ENCODE measurements at regions of chr19 and their contacts with region 1.

Region 1: DNA sequence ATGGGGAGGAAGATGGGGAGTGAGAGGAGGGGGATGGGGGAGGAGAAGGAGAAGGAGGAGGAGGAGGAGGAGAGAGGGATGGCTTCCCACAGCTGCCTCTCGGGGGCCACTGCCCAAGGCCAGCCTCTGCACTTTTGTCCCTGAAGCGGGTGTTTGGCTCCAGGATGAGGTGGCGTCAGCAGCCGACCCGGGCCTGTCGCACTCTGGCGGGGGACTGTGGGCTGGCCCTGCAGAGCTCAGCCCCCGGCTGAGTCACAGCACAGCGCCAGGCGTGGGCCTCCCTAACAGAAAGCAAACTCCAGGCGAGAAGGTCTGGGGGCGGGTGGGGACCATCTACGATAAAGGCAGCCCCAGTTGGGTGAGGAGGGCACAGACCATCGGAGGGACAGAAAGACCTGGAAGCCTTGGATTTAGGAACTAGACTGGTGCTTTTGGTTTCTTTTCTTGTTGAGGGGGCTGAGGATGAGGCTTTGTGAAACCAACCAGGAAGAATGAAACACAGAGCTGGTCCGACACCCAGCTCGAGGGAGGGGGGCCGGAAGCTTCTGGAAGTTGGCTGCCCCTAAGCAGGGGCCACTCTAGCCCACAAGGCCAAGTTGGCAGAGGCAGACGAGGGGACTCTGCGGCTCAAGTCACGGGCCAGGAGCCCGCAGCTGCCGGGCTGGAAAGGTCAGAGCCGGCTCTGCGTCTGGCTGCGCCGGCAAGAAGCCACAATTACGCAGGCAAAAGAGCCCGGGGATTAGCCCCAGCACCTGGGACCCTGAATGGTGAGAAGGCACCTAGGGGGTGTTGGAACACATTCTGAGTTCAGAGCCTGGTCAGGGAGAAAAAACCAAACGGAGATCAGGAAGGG is 18.2 kb downstream of the LSM4 start:
- DNase-seq: peak; percentile 64
- H3K4me3 Mint-ChIP-seq: peak overlapping the region; percentile 49
- H3K27ac Mint-ChIP-seq: peak overlapping the region; percentile 82
- H3K4me1 Mint-ChIP-seq: peaks cover 10% of the 10 kb centered on the region
- H3K27me3 Mint-ChIP-seq: no peaks in the 10 kb centered on the region
- CTCF ChIP-seq: no peak

Region 2: GRCh38 chr19:18322759-18323460 is 18.2 kb after region 1 on chr19 and contains the start of gene LSM4:
- CTCF ChIA-PET with region 1: interaction called, 11 read pairs
- intact Hi-C with region 1: no loop called
- DNase-seq: peak; percentile 95
- H3K4me3 Mint-ChIP-seq: peak within 1 kb of the TSS; percentile 72
- H3K27ac Mint-ChIP-seq: peak within 1 kb of the TSS; percentile 91
- H3K4me1 Mint-ChIP-seq: peaks cover 31% of the 10 kb centered on the region
- H3K27me3 Mint-ChIP-seq: no peaks in the 10 kb centered on the region
- CTCF ChIP-seq: no peak
- total RNA-seq, gene LSM4: 111 and 115 TPM in 2 replicates

Region 3: DNA sequence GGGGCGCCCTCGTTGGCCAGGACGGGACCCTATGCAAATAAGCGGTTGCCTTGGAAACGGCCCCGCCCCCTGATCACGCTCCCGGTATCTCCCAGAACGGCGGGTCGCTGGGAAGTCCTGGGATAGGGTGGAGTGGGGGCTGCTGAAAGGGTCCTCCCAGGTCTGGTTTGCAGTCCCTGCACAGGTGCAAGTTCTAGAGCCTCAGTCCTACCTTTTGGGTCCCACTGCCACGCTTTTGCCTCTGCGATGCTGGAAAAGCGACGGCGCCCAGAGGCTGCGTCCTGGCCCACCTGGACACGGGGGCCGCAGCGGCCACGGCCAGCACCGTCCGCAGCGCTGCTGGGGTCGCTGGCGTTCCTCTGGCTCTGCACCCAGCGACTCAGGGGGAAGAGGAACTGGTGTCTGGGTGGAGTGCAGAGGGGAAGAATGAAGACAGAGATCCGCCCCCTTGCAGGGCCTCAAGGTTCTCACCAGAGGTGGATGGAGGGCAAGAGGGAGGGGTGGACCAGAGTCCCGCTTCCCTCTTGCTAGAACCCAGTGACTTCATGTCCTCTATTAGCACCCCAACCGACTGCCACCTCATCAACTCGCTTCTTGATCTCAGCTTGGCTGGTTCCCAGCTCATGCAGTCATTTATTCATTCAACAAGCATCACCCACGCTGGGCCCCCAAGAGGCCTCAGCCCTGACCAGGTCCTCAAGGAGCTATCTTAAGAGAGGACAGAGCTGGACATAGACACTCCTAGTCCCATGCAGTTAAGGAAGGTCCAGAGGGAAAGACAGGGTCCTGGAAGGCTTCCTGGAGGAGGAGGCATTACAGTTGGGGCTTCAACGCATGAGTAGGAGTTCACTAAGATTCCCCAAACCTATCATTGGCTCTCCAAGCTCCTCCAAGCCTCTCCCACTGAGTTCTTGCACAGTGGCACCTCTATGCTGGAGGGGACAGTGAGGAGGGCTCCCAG is 92.8 kb after region 1 on chr19 and contains the start of gene LRRC25:
- CTCF ChIA-PET with region 1: no interaction called
- intact Hi-C with region 1: no loop called
- DNase-seq: no peak
- H3K4me3 Mint-ChIP-seq: no peak within 1 kb of the TSS
- H3K27ac Mint-ChIP-seq: no peak within 1 kb of the TSS
- H3K4me1 Mint-ChIP-seq: peaks cover 13% of the 10 kb centered on the region
- H3K27me3 Mint-ChIP-seq: no peaks in the 10 kb centered on the region
- CTCF ChIP-seq: no peak
- total RNA-seq, gene LRRC25: not detected in 2 replicates

Measured in Calu3 (cell line).